Activated CD8-positive, alpha-beta T cell treated with anti-CD3 and anti-CD28 coated beads, Interleukin-2, amount 10 ng/mL, durations not matched to agents 7 days and 5 days (primary cell): ENCODE measurements at regions of chr2 and their contacts with region 1.

Region 1: GRCh38 chr2:135839713-135840112 is 2.7 kb upstream of the LCT start:
- DNase-seq: no peak
- ATAC-seq: no peak
- H3K4me3 Mint-ChIP-seq: no peak overlapping the region
- H3K27ac Mint-ChIP-seq: no peak overlapping the region
- H3K4me1 Mint-ChIP-seq: peaks cover 48% of the 10 kb centered on the region
- H3K27me3 Mint-ChIP-seq: no peaks in the 10 kb centered on the region

Region 2: GRCh38 chr2:135825550-135826176 is 14.1 kb before region 1 on chr2:
- CTCF ChIA-PET with region 1: interaction called, 10 read pairs
- POLR2A ChIA-PET with region 1: no interaction called
- DNase-seq: no peak
- ATAC-seq: no peak
- H3K4me3 Mint-ChIP-seq: no peak overlapping the region
- H3K27ac Mint-ChIP-seq: no peak overlapping the region
- H3K4me1 Mint-ChIP-seq: peaks cover 44% of the 10 kb centered on the region
- H3K27me3 Mint-ChIP-seq: no peaks in the 10 kb centered on the region